CD4-positive, alpha-beta memory T cell (primary cell): ENCODE measurements at regions of chr5 and their contacts with region 1.

Region 1: DNA sequence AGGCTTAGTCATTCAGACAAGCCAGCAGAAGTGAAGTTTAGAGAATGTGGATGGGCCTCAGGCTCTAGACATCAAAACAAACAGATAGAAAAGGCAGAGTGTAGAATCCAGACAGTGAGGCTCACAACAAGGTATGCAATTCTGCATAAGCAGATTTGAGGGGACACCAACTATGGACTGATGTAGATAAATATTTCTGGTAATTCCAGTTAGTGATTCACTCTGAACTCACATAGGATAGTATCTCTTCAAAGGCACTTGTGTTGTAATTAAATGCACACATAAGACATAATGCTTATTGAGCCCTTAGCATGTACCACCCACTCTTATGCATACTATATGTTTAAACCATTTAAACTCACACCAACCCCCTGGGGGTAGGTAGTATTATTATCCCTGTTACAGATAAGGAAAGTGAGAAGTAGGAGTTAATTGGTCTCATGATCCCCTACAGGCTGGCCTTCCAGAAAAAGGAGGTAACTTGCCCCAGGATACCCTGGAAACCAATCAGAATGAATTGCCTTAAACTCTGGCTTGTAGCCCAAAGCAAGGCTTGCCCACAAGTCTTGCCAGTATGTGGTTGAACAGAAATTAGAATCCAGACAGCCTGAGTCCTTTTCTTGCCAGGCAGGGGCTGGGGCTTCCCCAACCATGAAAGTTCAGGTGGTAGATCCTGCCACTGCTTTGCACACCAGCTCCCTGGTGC is 39.5 kb upstream of the HSPB3 start:
- DNase-seq: no peak
- H3K4me3 ChIP-seq: no peak overlapping the region
- H3K4me3 Mint-ChIP-seq: no peak overlapping the region
- H3K27ac ChIP-seq: no peak overlapping the region
- H3K27ac Mint-ChIP-seq: no peak overlapping the region
- H3K4me1 ChIP-seq: no peaks in the 10 kb centered on the region
- H3K4me1 Mint-ChIP-seq: no peaks in the 10 kb centered on the region
- H3K27me3 ChIP-seq: no peaks in the 10 kb centered on the region
- H3K27me3 Mint-ChIP-seq: peaks cover 7 to 9% of the 10 kb centered on the region in 2 donors

Region 2: DNA sequence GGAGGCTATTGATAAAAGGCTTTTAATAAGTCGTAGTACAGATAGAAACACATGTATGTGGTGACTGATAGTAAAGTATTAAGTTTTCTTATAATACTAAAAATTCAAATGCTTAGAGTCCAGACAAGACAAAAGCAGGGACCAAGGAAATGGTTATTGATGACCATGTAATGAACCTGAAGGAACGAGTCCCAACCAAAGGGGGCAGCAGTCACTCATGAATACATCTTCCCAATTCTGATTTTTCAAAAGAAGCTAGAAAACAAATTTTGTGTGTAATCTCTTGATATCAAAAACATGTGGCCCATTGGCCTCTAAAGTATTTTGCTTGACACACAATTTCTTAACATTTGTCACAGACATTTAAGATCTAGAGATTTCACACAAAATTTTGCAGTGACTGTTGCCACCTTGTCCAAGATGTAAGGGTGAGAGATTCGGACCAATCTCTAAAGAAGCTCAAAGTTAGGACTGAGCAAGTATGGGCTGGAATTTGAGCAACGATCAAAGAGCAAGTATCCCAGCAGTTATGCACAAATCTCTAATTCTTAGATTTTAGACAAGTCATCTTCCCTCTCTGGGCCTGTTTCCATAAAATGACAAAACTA is 172.5 kb before region 1 on chr5:
- CTCF ChIA-PET with region 1: interaction called, 34 read pairs
- POLR2A ChIA-PET with region 1: no interaction called
- intact Hi-C with region 1: loop called (anchors 1 kb)
- DNase-seq: peak in 4 of 5 donors; percentile 21 to 36 (median 28)
- H3K4me3 ChIP-seq: no peak overlapping the region
- H3K4me3 Mint-ChIP-seq: no peak overlapping the region
- H3K27ac ChIP-seq: no peak overlapping the region
- H3K27ac Mint-ChIP-seq: no peak overlapping the region
- H3K4me1 ChIP-seq: no peaks in the 10 kb centered on the region
- H3K4me1 Mint-ChIP-seq: peaks cover 3 to 9% (median 6%) of the 10 kb centered on the region in 4 donors
- H3K27me3 ChIP-seq: no peaks in the 10 kb centered on the region
- H3K27me3 Mint-ChIP-seq: no peaks in the 10 kb centered on the region

Region 3: DNA sequence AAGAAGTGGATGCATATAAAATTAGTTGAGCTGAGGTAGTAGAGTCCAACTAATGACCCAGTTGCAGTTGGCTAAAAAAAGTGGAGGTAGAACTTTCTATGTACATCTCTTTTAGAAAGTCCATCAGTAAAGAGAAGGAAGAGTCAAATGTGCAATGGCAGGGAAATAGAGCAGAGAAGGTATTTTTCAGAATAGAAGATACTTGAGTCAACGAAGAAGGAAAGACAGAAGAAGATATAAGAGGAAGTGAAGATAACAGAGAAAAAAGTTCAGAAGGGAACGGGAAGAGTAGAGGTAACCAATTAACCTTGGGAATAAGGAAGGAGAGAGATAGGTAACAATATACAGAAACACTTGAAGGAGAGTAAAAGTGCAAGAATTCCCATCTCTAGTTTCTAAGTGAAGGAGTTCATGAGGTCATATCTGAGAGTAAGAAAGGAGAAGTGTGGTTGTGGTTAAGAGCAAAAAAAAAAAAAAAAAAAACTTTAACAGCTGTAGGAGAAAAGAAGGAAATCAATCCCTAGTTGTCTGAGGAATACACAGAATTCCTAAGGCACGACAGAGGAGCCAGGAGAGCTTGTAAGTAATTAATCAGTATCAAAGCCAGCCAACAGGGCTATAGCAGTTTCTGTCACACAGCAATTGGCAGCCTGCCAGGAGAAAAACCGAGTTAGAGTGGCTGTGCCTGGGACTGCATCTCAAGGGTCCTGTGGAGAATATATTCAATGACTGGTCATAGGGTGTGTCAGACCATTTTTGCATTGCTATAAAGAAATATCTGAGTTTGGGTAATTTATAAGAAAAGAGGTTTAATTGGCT is 166.6 kb before region 1 on chr5:
- CTCF ChIA-PET with region 1: interaction called, 34 read pairs
- POLR2A ChIA-PET with region 1: no interaction called
- intact Hi-C with region 1: no loop called
- DNase-seq: peak in 4 of 5 donors; percentile 5 to 14 (median 11)
- H3K4me3 ChIP-seq: no peak overlapping the region
- H3K4me3 Mint-ChIP-seq: no peak overlapping the region
- H3K27ac ChIP-seq: no peak overlapping the region
- H3K27ac Mint-ChIP-seq: no peak overlapping the region
- H3K4me1 ChIP-seq: no peaks in the 10 kb centered on the region
- H3K4me1 Mint-ChIP-seq: peaks cover 0 to 15% (median 4%) of the 10 kb centered on the region in 4 donors
- H3K27me3 ChIP-seq: no peaks in the 10 kb centered on the region
- H3K27me3 Mint-ChIP-seq: no peaks in the 10 kb centered on the region

Region 4: GRCh38 chr5:54404568-54404967 is 11.5 kb before region 1 on chr5:
- CTCF ChIA-PET with region 1: interaction called, 20 read pairs
- POLR2A ChIA-PET with region 1: no interaction called
- intact Hi-C with region 1: no loop called
- DNase-seq: no peak
- H3K4me3 ChIP-seq: no peak overlapping the region
- H3K4me3 Mint-ChIP-seq: no peak overlapping the region
- H3K27ac ChIP-seq: no peak overlapping the region
- H3K27ac Mint-ChIP-seq: no peak overlapping the region
- H3K4me1 ChIP-seq: no peaks in the 10 kb centered on the region
- H3K4me1 Mint-ChIP-seq: no peaks in the 10 kb centered on the region
- H3K27me3 ChIP-seq: no peaks in the 10 kb centered on the region
- H3K27me3 Mint-ChIP-seq: peaks cover 4 to 8% of the 10 kb centered on the region in 2 donors